ENCODE measurements at regions of chr7 and their contacts with region 1.

Region 1: GRCh38 chr7:148142660-148143248 is 447.8 kb upstream of the C7orf33 start:
- DNase-seq: peak; percentile 59
- H3K4me3 Mint-ChIP-seq: no peak overlapping the region
- H3K27ac Mint-ChIP-seq: no peak overlapping the region
- H3K4me1 Mint-ChIP-seq: no peaks in the 10 kb centered on the region
- H3K27me3 Mint-ChIP-seq: peaks cover 54% of the 10 kb centered on the region
- CTCF ChIP-seq: peak; percentile 63

Region 2: DNA sequence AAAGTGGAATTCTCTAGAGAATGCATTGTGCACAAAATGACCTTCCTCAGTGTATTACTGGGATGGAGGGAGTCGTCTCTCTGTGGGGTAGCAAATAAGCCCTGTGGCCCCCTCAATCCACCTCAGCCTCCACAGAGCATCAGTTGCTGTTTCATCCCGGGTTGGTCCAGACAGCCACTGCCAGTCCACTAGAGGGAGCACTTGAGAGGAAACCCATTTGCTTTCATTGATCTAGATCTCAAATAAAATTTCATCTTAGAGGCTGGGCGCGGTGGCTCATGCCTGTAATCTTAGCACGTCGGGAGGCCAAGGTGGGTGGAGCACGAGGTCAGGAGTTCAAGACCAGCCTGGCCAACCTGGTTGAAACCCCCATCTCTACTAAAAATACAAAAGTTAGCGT is 897.5 kb before region 1 on chr7:
- CTCF ChIA-PET with region 1: interaction called, 4 read pairs
- POLR2A ChIA-PET with region 1: no interaction called
- intact Hi-C with region 1: loop called (anchors 10 kb)
- DNase-seq: peak; percentile 62
- H3K4me3 Mint-ChIP-seq: no peak overlapping the region
- H3K27ac Mint-ChIP-seq: no peak overlapping the region
- H3K4me1 Mint-ChIP-seq: no peaks in the 10 kb centered on the region
- H3K27me3 Mint-ChIP-seq: peaks cover 58% of the 10 kb centered on the region
- CTCF ChIP-seq: peak; percentile 70

Region 3: GRCh38 chr7:147968046-147968610 is 174.6 kb before region 1 on chr7:
- CTCF ChIA-PET with region 1: no interaction called
- POLR2A ChIA-PET with region 1: no interaction called
- intact Hi-C with region 1: no loop called
- DNase-seq: no peak
- H3K4me3 Mint-ChIP-seq: no peak overlapping the region
- H3K27ac Mint-ChIP-seq: no peak overlapping the region
- H3K4me1 Mint-ChIP-seq: no peaks in the 10 kb centered on the region
- H3K27me3 Mint-ChIP-seq: peaks cover 7% of the 10 kb centered on the region
- CTCF ChIP-seq: no peak

Region 4: DNA sequence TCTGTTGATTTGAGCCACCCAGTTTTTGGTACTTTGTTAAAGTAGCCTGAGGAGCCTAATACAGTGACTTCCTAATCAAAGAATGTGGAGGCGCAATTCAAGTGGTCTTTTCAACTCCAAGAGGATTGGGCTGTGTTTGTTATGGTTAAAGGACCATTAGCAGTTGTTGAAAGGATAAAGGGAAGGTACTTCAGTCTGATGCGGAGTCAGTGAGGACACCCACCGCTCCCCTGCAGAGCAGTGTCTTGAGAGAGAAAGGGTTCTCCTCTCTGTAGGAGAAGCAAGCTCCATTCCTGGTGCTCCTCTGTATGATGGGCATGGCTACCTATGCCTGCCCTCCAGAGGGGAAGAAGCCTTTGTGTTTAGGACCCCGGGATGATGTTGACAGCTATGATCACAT is 142.8 kb before region 1 on chr7:
- CTCF ChIA-PET with region 1: no interaction called
- POLR2A ChIA-PET with region 1: no interaction called
- intact Hi-C with region 1: no loop called
- DNase-seq: no peak
- H3K4me3 Mint-ChIP-seq: no peak overlapping the region
- H3K27ac Mint-ChIP-seq: no peak overlapping the region
- H3K4me1 Mint-ChIP-seq: no peaks in the 10 kb centered on the region
- H3K27me3 Mint-ChIP-seq: peaks cover 15% of the 10 kb centered on the region
- CTCF ChIP-seq: no peak

Region 5: GRCh38 chr7:148129029-148129428 is 13.7 kb before region 1 on chr7:
- CTCF ChIA-PET with region 1: interaction called, 23 read pairs
- POLR2A ChIA-PET with region 1: no interaction called
- intact Hi-C with region 1: no loop called
- DNase-seq: no peak
- H3K4me3 Mint-ChIP-seq: no peak overlapping the region
- H3K27ac Mint-ChIP-seq: no peak overlapping the region
- H3K4me1 Mint-ChIP-seq: no peaks in the 10 kb centered on the region
- H3K27me3 Mint-ChIP-seq: peaks cover 45% of the 10 kb centered on the region
- CTCF ChIP-seq: no peak

Region 6: DNA sequence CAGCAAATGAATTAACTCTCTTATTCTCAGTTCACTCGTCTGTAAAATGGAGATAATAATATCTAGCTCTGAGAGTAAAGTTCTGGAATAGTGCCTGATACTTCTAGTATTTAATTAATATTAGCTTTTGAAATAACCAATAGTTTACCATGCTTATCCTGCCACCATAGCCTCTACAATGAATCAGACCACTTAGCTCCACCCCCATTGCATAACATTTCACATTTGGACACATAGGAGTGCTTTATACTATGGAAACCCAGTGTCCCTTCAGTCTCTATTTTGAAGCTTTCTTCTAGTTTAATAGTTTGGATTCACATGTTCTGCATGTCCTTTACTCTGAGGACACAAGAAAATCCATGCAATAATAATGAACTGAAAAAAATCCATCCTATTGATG is 20.5 kb after region 1 on chr7:
- CTCF ChIA-PET with region 1: interaction called, 20 read pairs
- POLR2A ChIA-PET with region 1: no interaction called
- intact Hi-C with region 1: no loop called
- DNase-seq: peak; percentile 54
- H3K4me3 Mint-ChIP-seq: no peak overlapping the region
- H3K27ac Mint-ChIP-seq: no peak overlapping the region
- H3K4me1 Mint-ChIP-seq: no peaks in the 10 kb centered on the region
- H3K27me3 Mint-ChIP-seq: peaks cover 75% of the 10 kb centered on the region
- CTCF ChIP-seq: no peak

Region 7: GRCh38 chr7:148334959-148335577 is 192.3 kb after region 1 on chr7:
- CTCF ChIA-PET with region 1: no interaction called
- POLR2A ChIA-PET with region 1: no interaction called
- intact Hi-C with region 1: no loop called
- DNase-seq: peak; percentile 78
- H3K4me3 Mint-ChIP-seq: no peak overlapping the region
- H3K27ac Mint-ChIP-seq: no peak overlapping the region
- H3K4me1 Mint-ChIP-seq: peaks cover 45% of the 10 kb centered on the region
- H3K27me3 Mint-ChIP-seq: peaks cover 40% of the 10 kb centered on the region
- CTCF ChIP-seq: no peak